Right cardiac atrium (tissue), 5 donors: ENCODE measurements at regions of chr7 and their contacts with region 1.

Region 1: DNA sequence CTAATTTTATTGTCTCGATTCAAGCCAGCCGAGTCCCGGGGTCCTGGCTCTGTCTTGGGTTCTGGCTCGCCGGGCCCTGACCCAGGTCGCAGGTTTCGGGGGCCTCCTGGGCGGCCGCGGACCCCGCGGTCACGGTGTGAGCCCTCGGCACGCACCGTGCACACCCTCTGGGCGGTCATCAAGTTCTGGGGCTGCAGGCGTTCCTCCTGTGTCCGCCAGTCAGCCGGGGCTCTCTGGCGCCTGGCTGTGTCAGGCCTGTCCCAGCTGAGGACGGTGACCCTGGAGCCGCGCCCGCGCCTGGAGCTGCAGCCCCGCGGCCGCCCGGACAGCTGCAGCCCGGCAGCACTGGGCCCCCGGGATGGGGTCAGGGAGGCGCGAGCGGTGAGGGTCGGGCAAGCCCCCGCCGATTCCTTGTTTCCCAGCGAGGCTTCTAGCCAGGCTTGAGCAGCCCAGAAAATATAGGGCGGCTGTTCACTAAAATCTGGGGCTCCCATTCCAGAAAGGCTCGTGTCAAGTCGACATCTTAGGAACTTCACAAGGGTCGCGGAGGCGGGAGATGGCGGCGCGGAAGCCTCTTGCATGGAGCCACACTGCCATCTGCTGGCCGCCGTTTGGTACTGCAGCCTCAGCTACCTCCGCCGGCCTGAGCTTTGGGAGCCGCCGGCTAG is 4.2 kb upstream of the HOXA7 start:
- DNase-seq: peak; percentile 85 to 93 (median 92)
- ATAC-seq: peak; percentile 71 to 88
- H3K4me3 ChIP-seq: peak overlapping the region; percentile 59
- H3K27ac ChIP-seq: no peak overlapping the region
- H3K4me1 ChIP-seq: peaks cover 4% of the 10 kb centered on the region
- H3K27me3 ChIP-seq: no peaks in the 10 kb centered on the region

Region 2: DNA sequence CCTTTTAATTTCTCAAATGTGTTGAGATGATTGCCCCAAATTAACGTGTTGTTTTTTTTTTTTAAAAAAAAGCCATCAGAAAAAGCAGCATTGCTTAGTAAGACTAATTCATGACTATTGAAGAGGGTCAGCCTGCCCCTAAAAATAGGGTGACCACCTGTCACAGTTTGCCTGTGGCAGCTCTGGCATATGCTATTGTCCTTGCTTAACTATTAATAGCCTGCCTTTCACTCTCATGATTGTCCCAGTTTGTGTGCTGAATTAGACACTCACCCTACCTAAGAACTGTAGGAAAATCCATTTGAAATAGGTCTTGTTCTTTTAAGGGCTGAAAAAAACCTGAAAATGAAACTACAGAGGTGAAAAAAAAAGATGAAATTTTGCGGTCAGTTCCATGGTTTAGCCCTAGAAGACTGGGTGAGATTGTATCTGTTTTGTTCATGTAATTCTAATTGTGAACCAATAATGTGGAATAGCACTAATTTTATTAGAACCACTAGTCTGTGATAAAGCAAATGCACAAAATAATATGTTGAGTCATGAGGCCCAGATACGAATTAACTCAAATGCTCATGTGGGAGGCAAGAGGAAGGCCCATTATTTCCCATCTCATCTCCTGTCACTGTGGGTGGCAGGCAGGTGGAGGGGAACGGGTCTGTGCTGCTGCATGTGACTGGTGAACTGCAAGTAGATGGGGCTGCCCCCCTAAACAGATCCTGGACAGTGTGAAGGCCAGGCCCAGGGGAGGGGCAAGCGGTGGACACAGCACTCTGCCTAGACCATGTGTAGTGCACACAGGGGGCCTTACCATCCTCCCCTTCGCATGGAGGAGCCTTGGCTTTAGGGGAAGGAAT is 1274.1 kb before region 1 on chr7:
- intact Hi-C with region 1: loop called in 1 of 4 experiments (anchors 10 kb)
- DNase-seq: peak in 1 of 3 donors; percentile 48
- ATAC-seq: peak in 1 of 2 donors; percentile 59
- H3K4me3 ChIP-seq: no peak overlapping the region
- H3K27ac ChIP-seq: no peak overlapping the region
- H3K4me1 ChIP-seq: no peaks in the 10 kb centered on the region
- H3K27me3 ChIP-seq: no peaks in the 10 kb centered on the region

Region 3: GRCh38 chr7:26365077-26365900 is 795.4 kb before region 1 on chr7:
- intact Hi-C with region 1: loop called in 2 of 4 experiments (anchors 10 kb)
- DNase-seq: no peak
- ATAC-seq: peak; percentile 84 to 86
- H3K4me3 ChIP-seq: no peak overlapping the region
- H3K27ac ChIP-seq: no peak overlapping the region
- H3K4me1 ChIP-seq: no peaks in the 10 kb centered on the region
- H3K27me3 ChIP-seq: no peaks in the 10 kb centered on the region

Region 4: DNA sequence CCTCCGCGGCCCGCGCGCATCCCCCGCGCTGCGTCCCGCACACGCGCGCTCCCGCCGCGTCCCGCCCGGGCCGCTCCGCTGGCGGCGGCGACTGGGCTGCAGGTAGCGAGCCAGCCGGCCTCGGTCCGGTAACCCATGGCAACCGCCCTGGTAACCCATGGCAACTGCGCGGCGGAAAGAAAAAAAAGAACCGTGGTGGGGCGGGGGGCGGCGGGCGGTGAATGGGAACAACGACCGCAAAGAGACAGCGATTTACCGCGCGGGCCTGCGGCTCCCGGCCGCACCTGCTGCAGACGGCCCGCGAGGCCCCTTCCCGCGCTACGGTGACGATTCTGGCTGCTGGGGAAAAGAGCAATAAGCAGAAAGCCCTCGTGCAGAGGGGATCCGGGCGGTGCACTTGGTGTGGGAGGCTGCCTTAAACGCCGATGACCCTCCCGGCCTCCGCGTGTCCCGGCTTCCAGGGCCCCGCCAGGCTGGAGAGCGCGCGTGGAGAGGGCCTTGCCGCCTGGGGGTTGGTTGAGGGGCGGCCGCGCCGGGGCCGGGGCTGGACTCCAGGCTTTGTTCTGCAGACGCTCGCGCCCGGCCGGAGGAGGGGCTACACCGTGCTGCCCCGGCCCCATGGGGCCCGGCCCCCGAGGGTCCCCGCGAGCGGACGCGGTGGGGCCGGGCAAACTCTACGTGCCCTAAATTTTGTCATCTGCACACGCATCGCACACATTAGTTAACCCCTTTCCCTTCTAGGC is 784.3 kb before region 1 on chr7:
- intact Hi-C with region 1: loop called in 2 of 4 experiments (anchors 5 to 10 kb)
- DNase-seq: peak in 2 of 3 donors; percentile 53 to 65
- ATAC-seq: peak; percentile 68 to 80
- H3K4me3 ChIP-seq: peak overlapping the region; percentile 39
- H3K27ac ChIP-seq: no peak overlapping the region
- H3K4me1 ChIP-seq: no peaks in the 10 kb centered on the region
- H3K27me3 ChIP-seq: no peaks in the 10 kb centered on the region

Region 5: GRCh38 chr7:26681819-26682418 is 478.8 kb before region 1 on chr7:
- intact Hi-C with region 1: loop called in 3 of 4 experiments (anchors 5 kb)
- DNase-seq: no peak
- ATAC-seq: no peak
- H3K4me3 ChIP-seq: no peak overlapping the region
- H3K27ac ChIP-seq: no peak overlapping the region
- H3K4me1 ChIP-seq: no peaks in the 10 kb centered on the region
- H3K27me3 ChIP-seq: no peaks in the 10 kb centered on the region

Region 6: DNA sequence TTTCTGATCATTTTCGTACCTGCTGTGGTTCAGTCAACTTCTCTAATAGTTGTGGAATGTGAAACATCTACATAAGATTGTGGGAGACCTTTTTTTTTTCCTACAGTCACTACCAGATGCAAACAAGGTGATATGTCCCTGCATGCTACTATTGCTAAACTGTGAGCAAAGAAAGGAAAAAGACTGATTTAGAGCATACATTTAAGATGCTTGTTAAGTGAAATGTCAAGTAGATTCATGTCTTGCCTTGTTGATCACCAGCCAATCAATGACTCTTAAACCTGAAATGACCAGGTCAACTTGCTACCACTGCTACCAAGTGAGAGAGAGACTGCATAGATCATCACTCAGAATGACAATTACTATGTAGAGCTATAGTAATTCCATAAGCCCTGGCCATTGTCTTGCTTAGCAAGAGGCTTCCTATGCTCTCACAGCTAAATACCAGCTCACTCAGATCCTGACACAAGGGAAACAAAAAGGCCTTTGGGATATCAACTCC is 212.0 kb before region 1 on chr7:
- intact Hi-C with region 1: no loop called
- DNase-seq: no peak
- ATAC-seq: no peak
- H3K4me3 ChIP-seq: no peak overlapping the region
- H3K27ac ChIP-seq: no peak overlapping the region
- H3K4me1 ChIP-seq: no peaks in the 10 kb centered on the region
- H3K27me3 ChIP-seq: no peaks in the 10 kb centered on the region

Region 7: GRCh38 chr7:27462575-27463270 is 302.0 kb after region 1 on chr7:
- intact Hi-C with region 1: no loop called
- DNase-seq: no peak
- ATAC-seq: no peak
- H3K4me3 ChIP-seq: no peak overlapping the region
- H3K27ac ChIP-seq: no peak overlapping the region
- H3K4me1 ChIP-seq: peaks cover 2% of the 10 kb centered on the region
- H3K27me3 ChIP-seq: no peaks in the 10 kb centered on the region